Calu3 (cell line): ENCODE measurements at regions of chr6 and their contacts with region 1.

Region 1: DNA sequence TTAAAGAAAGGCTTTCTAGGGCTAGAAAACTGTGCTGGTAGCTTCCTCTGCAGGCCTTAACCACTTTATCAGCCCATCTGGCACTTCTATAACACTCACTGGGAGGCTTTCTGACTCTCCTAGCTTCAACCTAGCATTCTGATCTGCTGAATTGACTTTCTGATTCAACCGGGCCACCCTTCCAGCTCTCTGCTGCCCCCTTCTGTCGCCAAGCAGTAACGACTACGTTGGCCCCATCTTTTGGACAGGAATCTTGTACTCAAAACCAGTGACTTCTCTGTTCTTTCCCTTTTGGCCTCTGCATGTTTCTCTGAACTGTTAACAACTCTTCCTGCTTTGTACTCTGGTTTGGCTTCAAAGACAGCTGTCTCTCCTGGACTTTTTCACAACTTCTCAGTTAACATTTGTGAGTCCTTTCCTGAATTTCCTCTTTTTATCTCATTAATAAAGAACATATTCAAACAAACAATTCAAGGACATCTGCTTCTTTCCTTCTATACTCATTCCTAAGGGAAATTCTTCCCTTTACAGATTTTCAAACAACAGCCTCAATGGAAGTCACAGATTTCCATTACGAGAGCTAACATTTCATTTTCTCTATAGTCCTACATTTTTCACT is 43.9 kb upstream of the FAM135A start:
- DNase-seq: peak; percentile 86
- H3K4me3 Mint-ChIP-seq: no peak overlapping the region
- H3K27ac Mint-ChIP-seq: no peak overlapping the region
- H3K4me1 Mint-ChIP-seq: peaks cover 14% of the 10 kb centered on the region
- H3K27me3 Mint-ChIP-seq: peaks cover 40% of the 10 kb centered on the region
- CTCF ChIP-seq: peak; percentile 93

Region 2: DNA sequence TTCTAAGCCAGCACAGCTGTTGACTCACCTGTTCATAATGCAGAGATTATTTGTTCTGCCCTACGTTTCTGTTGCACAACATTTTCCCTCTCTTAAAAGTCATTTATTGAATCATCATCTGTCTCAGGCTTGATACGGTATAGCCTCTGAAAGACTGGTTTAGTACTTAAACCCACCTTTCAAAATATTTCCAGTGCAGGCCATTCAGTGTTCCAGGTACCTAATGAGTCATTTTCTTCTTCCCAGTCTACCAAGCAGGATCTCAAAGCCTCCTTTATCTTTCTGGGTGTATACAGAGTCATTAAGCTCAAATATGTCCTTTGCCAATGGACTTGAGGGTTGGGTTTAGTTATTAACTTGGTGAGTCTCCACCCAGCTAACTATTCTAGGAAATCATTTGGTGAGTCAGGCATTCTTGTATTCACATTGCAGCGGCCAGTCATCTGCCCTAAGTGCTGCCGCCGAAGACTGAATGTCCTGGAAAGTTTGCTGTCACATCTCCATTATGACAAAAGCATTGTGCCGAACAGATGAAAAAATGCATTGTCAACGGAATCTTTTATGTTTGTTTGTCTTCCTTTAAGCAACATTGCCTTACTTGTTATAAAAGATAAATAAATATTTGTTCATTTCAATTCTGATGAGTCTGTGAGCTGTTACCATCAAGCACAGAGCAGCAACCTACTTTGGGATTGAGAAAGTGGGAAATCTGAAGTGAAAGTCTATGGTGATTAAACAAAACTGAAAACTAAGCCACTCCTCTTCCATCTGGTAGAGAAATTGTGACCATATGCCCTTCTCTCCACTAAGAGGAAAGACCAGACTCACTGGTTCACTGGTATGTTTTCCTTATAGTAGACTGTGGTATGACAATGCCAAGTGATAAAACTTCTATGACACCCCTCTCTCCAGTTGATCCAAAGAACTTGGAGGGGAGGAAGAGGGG is 29.6 kb after region 1 on chr6:
- CTCF ChIA-PET with region 1: interaction called, 18 read pairs
- intact Hi-C with region 1: loop called (anchors 2 kb)
- DNase-seq: peak; percentile 79
- H3K4me3 Mint-ChIP-seq: peak overlapping the region; percentile 63
- H3K27ac Mint-ChIP-seq: peak overlapping the region; percentile 90
- H3K4me1 Mint-ChIP-seq: peaks cover 86% of the 10 kb centered on the region
- H3K27me3 Mint-ChIP-seq: no peaks in the 10 kb centered on the region
- CTCF ChIP-seq: no peak

Region 3: DNA sequence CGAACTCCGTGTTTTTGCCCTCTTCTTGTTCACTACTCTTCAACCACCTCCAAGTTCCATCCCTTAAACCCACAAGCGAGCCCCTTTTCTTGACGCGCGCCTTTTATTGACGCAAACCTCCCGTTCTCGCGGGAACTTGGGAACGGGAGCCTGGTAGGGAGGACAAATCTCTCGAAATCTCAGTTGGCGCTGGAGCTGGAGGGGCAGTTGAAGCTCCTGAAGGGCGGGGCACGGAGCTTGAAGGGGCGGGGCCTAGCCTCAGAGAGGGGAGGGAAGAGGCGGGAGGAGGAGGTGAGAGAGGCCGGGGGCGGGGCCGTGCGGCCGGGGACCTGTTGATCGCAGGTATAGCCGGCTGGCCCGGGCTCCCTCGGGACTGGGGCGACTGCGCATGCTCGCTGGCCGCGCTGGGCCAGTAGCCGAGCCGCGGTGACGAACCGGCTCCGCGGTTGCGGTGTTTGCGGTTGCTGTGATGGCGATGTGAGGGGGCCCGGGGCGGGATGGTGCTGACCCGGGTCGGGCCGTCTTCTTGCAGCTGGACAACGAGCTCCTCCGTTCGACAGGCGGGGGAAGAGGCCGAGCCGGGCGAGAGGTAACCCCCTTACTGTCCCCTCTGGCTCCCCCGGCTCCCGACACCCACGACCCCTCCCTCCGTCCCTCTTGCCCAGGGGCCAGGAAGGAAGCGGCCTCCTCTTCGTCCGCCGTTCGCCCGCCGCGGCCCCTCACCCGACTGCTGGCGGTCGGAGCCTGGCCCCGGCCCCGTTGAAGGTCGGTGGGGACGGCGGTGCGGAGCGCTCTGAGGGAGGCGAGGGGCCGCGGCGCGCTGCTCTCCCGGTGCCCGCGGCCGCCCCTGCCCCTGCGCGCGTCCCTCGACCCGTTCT is 43.9 kb after region 1 on chr6 and contains the start of gene FAM135A:
- CTCF ChIA-PET with region 1: interaction called, 10 read pairs
- intact Hi-C with region 1: loop called (anchors 1 kb)
- DNase-seq: peak; percentile 100
- H3K4me3 Mint-ChIP-seq: peak within 1 kb of the TSS; percentile 90
- H3K27ac Mint-ChIP-seq: peak within 1 kb of the TSS; percentile 91
- H3K4me1 Mint-ChIP-seq: peaks cover 22% of the 10 kb centered on the region
- H3K27me3 Mint-ChIP-seq: no peaks in the 10 kb centered on the region
- CTCF ChIP-seq: no peak
- total RNA-seq, gene FAM135A: 83.2 and 89.2 TPM in 2 replicates

Region 4: GRCh38 chr6:70421509-70421908 is 52.1 kb after region 1 on chr6:
- CTCF ChIA-PET with region 1: interaction called, 8 read pairs
- intact Hi-C with region 1: loop called (anchors 1 kb)
- DNase-seq: no peak
- H3K4me3 Mint-ChIP-seq: no peak overlapping the region
- H3K27ac Mint-ChIP-seq: no peak overlapping the region
- H3K4me1 Mint-ChIP-seq: peaks cover 55% of the 10 kb centered on the region
- H3K27me3 Mint-ChIP-seq: no peaks in the 10 kb centered on the region
- CTCF ChIP-seq: no peak

Region 5: DNA sequence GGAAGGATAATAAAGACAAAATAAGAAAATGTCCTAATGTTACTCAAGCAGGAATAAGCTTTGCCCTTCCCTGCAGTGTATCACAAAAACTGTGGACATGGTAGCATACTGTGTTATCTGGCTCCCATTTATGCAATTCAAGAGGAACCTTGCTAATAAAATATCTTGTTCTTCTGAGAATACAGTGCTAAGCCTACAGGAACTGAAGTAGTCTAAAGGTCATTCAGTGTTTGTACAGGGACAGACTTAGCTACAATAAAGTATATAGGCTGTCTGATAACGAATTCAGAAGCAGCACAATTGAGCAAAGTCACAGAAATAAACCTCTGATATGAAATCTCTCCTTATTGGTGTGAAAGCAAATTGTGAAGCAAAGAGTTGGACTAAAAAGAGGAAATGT is 137.7 kb after region 1 on chr6:
- CTCF ChIA-PET with region 1: no interaction called
- intact Hi-C with region 1: loop called (anchors 5 kb)
- DNase-seq: no peak
- H3K4me3 Mint-ChIP-seq: no peak overlapping the region
- H3K27ac Mint-ChIP-seq: peak overlapping the region; percentile 12
- H3K4me1 Mint-ChIP-seq: peaks cover 9% of the 10 kb centered on the region
- H3K27me3 Mint-ChIP-seq: no peaks in the 10 kb centered on the region
- CTCF ChIP-seq: no peak

Region 6: GRCh38 chr6:70686548-70687133 is 317.2 kb after region 1 on chr6:
- CTCF ChIA-PET with region 1: no interaction called
- intact Hi-C with region 1: loop called (anchors 2 kb)
- DNase-seq: no peak
- H3K4me3 Mint-ChIP-seq: no peak overlapping the region
- H3K27ac Mint-ChIP-seq: no peak overlapping the region
- H3K4me1 Mint-ChIP-seq: peaks cover 23% of the 10 kb centered on the region
- H3K27me3 Mint-ChIP-seq: no peaks in the 10 kb centered on the region
- CTCF ChIP-seq: peak; percentile 65

Region 7: GRCh38 chr6:71602385-71603007 is 1233.1 kb after region 1 on chr6:
- CTCF ChIA-PET with region 1: no interaction called
- intact Hi-C with region 1: no loop called
- DNase-seq: peak; percentile 71
- H3K4me3 Mint-ChIP-seq: no peak overlapping the region
- H3K27ac Mint-ChIP-seq: peak overlapping the region; percentile 78
- H3K4me1 Mint-ChIP-seq: peaks cover 88% of the 10 kb centered on the region
- H3K27me3 Mint-ChIP-seq: no peaks in the 10 kb centered on the region
- CTCF ChIP-seq: no peak